Sciatic nerve (tissue), 2 donors: ENCODE measurements at regions of chr22 and their contacts with region 1.

Region 1: GRCh38 chr22:20536590-20537324 is 29.3 kb downstream of the MED15 start:
- DNase-seq: peak; percentile 48
- ATAC-seq: no peak

Region 2: GRCh38 chr22:20128902-20129746 is 407.6 kb before region 1 on chr22:
- intact Hi-C with region 1: no loop called
- DNase-seq: no peak
- ATAC-seq: no peak

Region 3: DNA sequence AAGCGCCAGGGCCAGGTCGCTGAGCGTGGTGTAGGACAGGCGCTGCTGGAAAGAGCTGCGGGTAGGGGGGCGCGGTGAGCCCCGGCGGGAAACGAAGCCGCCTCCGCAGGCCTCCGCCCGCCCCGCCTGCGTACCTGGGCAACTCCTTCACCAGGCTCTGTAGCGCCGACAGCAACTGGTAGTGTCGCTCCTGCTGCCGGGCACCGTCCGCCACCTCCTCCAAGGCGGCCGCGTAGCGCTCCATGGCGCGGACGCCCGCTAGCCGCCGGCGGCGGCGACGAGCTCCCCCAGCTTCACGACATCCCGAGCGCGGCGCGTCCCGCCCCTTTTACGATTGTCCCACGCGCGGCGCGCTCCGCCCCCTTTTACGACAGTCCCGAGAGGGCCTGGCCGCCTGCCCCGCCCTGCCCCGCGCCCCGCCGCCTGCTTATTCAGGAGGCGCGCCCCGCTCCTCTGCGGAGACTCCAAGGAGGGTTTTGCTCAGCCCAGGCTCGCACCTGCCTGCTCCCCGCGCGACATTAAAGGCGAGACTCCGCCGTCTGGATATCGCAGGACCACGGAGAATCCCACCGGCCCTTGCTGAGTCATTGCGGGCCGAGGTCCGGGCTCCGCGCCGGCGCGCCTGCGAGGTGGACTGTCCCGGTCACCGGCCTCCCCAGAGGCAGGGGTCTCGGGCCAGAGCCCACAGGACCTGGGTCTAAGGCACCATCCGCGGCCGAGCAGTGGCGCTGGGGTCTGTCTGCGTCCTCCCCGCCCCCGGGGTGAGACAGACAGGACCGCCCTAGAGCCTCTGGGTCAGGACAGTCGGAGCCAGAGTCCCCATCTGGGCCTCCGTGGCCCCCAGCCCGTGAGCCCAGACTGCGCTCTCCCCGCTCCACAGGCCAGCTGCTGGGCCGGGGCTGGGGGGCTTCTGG is 216.8 kb before region 1 on chr22 and contains the start of gene DGCR6L:
- intact Hi-C with region 1: no loop called
- DNase-seq: peak; percentile 98
- ATAC-seq: peak; percentile 95
- total RNA-seq, gene DGCR6L: 28.9 TPM

Region 4: GRCh38 chr22:20429254-20430100 is 107.3 kb before region 1 on chr22:
- intact Hi-C with region 1: no loop called
- DNase-seq: peak; percentile 80
- ATAC-seq: peak; percentile 40

Region 5: GRCh38 chr22:20463324-20464095 is 73.2 kb before region 1 on chr22:
- intact Hi-C with region 1: loop called (anchors 2 kb)
- DNase-seq: no peak
- ATAC-seq: peak; percentile 42

Region 6: GRCh38 chr22:20816559-20816958 is 279.8 kb after region 1 on chr22:
- intact Hi-C with region 1: no loop called
- DNase-seq: no peak
- ATAC-seq: no peak